Activated CD4-positive, alpha-beta memory T cell treated with anti-CD3 and anti-CD28 coated beads, Interleukin-2, amount 10 ng/mL, durations not matched to agents 7 days and 5 days (primary cell): ENCODE measurements at regions of chr12 and their contacts with region 1.

Region 1: GRCh38 chr12:122500685-122501488 is at the start of gene ZCCHC8:
- DNase-seq: peak; percentile 98
- H3K4me3 Mint-ChIP-seq: peak within 1 kb of the TSS; percentile 99
- H3K27ac Mint-ChIP-seq: peak within 1 kb of the TSS; percentile 97
- H3K4me1 Mint-ChIP-seq: peaks cover 41% of the 10 kb centered on the region
- H3K27me3 Mint-ChIP-seq: no peaks in the 10 kb centered on the region
- total RNA-seq, gene ZCCHC8: 44.4 to 46.6 TPM

Region 2: DNA sequence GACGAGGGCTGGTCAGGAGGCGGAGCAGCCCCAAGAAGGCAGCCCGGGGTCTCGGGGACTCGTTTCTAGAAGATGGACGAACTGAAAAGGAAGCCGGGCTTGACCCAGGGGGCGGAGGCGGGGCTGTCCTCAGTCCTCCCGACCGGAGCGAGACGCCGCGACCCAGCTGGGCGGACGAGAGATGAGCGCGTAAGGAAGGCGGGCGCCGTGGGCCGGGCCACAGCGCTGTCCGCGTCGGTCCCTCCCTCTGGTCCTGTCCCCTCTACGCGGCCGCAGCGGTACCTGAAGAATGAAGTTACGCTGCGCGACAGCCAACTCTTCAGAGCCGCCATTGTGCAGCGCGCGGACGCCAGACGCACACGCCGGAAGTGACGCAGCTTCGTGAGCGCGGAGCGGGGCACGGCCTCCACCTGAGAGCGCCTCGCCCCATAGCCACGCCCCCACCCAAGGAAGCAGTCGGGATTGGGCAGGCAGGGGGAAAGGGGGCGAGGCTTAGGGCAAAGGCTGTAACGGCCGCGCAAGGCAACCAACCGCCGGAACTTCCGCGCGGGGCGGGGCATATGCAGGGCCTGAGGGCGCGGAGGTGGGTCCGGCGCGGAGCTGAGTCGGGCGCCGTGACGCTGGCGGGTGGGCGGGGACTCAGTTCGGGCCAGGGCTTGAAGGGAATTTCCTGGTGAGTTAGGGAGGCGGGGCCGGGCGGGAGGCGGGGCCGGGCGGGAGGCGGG is 275.0 kb before region 1 on chr12 and contains the start of gene DIABLO:
- CTCF ChIA-PET with region 1: no interaction called
- POLR2A ChIA-PET with region 1: interaction called, 14 read pairs
- DNase-seq: peak; percentile 100
- H3K4me3 Mint-ChIP-seq: peak within 1 kb of the TSS; percentile 84
- H3K27ac Mint-ChIP-seq: peak within 1 kb of the TSS; percentile 86
- H3K4me1 Mint-ChIP-seq: peaks cover 41% of the 10 kb centered on the region
- H3K27me3 Mint-ChIP-seq: no peaks in the 10 kb centered on the region
- total RNA-seq, gene DIABLO: 40.8 to 41.7 TPM

Region 3: DNA sequence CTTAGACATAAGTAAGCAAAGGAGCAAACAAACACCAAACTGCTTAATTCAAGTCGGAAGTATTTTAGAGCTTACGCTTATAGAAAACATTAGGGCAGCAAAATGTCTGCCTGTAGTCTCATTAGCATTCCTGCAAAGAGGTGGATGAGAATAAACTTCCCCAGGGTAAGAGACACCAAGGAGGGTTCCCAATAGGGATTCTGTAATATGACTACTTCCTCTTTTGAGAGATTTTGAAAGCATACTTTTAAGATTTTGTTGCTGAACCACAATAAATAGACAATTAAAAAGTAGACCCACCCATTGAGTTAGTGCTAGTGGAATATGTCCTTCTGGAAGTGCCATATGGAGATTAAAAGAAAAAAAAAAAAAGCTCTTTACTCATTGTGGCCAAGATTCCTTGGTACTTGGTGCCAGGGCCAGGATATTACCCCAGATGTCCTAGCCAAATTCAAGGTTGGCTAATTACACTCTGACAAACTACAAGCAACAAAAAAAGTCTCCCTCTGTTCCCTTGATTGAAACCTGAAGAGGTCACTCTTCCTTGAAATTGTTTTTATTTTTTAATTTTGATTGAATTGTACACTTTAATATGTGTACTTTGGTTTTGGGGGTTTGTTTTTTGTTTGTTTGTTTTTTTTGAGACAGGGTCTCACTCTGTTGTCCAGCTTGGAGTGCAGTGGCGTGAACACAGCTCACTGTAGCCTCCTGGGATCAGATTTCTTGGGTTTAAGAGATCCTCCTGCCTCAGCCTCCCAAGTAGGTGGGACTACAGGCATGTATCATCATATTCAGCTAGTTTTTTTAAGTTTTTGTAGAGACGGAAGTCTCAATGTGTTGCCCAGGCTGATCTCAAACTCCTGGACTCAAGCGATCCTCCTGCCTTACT is 87.1 kb before region 1 on chr12:
- CTCF ChIA-PET with region 1: interaction called, 3 read pairs
- POLR2A ChIA-PET with region 1: interaction called, 17 read pairs
- DNase-seq: no peak
- H3K4me3 Mint-ChIP-seq: no peak overlapping the region
- H3K27ac Mint-ChIP-seq: peak overlapping the region; percentile 91
- H3K4me1 Mint-ChIP-seq: peaks cover 40% of the 10 kb centered on the region
- H3K27me3 Mint-ChIP-seq: no peaks in the 10 kb centered on the region

Region 4: DNA sequence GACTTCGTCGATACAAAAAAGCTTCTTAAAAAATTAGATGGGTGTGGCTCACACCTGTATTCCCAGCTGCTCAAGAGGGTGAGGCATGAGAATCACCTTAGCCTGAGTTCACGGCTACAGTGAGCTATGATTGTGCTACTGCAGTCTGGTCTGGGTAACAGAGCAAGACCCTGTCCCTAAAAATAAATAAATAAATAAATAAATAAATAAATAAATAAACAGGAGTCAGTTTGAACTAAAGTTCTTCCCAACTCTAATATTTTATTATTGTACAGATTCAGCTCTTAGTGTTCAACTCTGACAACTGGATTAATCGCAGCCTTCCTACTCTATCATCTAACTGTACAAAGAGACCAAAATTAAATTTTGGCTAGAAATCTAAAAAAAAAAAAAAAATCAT is 65.7 kb before region 1 on chr12:
- CTCF ChIA-PET with region 1: no interaction called
- POLR2A ChIA-PET with region 1: no interaction called
- DNase-seq: no peak
- H3K4me3 Mint-ChIP-seq: no peak overlapping the region
- H3K27ac Mint-ChIP-seq: no peak overlapping the region
- H3K4me1 Mint-ChIP-seq: no peaks in the 10 kb centered on the region
- H3K27me3 Mint-ChIP-seq: no peaks in the 10 kb centered on the region

Region 5: DNA sequence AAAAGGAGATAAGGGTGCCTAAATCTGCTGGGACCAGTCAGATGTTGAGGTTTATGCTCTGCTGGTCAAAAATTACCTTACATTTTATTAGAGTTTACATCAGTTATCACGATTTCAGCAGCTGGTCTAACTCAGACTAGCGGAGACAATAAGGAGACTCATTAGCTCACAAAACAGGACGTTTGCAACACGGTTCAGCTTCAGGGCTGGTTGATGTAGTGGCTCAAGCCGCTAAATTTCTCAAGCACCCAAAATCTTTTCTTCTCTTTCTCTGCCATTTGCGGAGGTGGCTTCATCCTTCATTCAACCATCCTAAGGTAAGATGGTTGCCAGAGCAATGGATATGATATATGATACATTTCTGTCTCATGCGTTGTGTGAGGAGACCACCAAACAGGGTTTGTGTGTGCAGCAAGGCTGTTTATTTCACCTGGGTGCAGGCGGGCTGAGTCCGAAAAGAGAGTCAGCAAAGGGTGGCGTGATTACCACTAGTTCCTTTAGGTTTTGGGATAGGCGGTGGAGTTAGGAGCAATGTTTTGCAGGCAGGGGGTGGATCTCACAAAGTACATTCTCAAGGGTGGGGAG is 48.1 kb before region 1 on chr12:
- CTCF ChIA-PET with region 1: interaction called, 3 read pairs
- POLR2A ChIA-PET with region 1: interaction called, 14 read pairs
- DNase-seq: peak; percentile 23
- H3K4me3 Mint-ChIP-seq: peak overlapping the region; percentile 55
- H3K27ac Mint-ChIP-seq: peak overlapping the region; percentile 99
- H3K4me1 Mint-ChIP-seq: peaks cover 40% of the 10 kb centered on the region
- H3K27me3 Mint-ChIP-seq: no peaks in the 10 kb centered on the region

Region 6: DNA sequence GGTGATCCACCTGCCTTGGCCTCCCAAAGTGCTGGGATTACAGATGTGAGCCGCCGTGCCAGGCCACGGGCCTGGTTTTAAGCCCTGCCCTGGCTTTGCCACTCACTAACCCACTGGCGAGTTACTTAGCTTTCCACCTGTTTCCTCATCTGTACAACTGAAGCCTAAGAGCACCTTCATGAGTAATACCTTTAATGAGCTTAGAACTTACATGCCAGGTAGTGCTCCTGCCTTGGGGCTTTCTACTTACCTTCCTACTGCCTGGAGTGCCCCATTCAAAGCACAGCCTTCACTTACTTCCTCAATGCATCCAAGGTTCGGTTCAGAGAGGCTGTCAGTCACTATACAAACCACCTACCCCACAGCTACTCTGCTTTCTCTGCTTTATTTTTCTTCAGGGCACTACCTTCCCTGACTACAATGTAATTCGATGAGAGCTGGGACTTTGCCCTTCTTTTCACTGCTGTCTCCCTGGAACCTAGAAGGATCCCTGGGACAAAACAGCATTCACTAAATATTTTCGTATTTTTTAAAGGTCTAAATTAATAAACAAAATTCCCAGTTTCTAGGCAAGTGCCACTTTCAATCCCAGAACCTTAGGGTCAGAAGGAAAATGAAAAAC is 14.0 kb before region 1 on chr12:
- CTCF ChIA-PET with region 1: interaction called, 11 read pairs
- POLR2A ChIA-PET with region 1: interaction called, 49 read pairs
- DNase-seq: no peak
- H3K4me3 Mint-ChIP-seq: no peak overlapping the region
- H3K27ac Mint-ChIP-seq: no peak overlapping the region
- H3K4me1 Mint-ChIP-seq: peaks cover 13% of the 10 kb centered on the region
- H3K27me3 Mint-ChIP-seq: no peaks in the 10 kb centered on the region

Region 7: GRCh38 chr12:122721057-122721545 is 220.2 kb after region 1 on chr12:
- CTCF ChIA-PET with region 1: no interaction called
- POLR2A ChIA-PET with region 1: no interaction called
- DNase-seq: no peak
- H3K4me3 Mint-ChIP-seq: peak overlapping the region; percentile 0
- H3K27ac Mint-ChIP-seq: peak overlapping the region; percentile 21
- H3K4me1 Mint-ChIP-seq: peaks cover 40% of the 10 kb centered on the region
- H3K27me3 Mint-ChIP-seq: peaks cover 2% of the 10 kb centered on the region